Activated CD8-positive, alpha-beta T cell treated with anti-CD3 and anti-CD28 coated beads for 36 hours (primary cell): ENCODE measurements at regions of chr12 and their contacts with region 1.

Region 1: GRCh38 chr12:9760699-9761418 is at the start of gene CD69:
- DNase-seq: peak; percentile 89
- ATAC-seq: peak; percentile 57
- H3K4me3 Mint-ChIP-seq: peak within 1 kb of the TSS; percentile 97
- H3K27ac Mint-ChIP-seq: peak within 1 kb of the TSS; percentile 99
- H3K4me1 Mint-ChIP-seq: peaks cover 34% of the 10 kb centered on the region
- H3K27me3 Mint-ChIP-seq: no peaks in the 10 kb centered on the region
- CTCF ChIP-seq: no peak
- total RNA-seq, gene CD69: 166 to 174 TPM

Region 2: GRCh38 chr12:9634177-9634803 is 126.6 kb before region 1 on chr12:
- CTCF ChIA-PET with region 1: no interaction called
- POLR2A ChIA-PET with region 1: no interaction called
- intact Hi-C with region 1: no loop called
- DNase-seq: peak; percentile 92
- ATAC-seq: peak; percentile 89
- H3K4me3 Mint-ChIP-seq: peak overlapping the region; percentile 31
- H3K27ac Mint-ChIP-seq: peak overlapping the region; percentile 85
- H3K4me1 Mint-ChIP-seq: peaks cover 54% of the 10 kb centered on the region
- H3K27me3 Mint-ChIP-seq: no peaks in the 10 kb centered on the region
- CTCF ChIP-seq: peak; percentile 91

Region 3: DNA sequence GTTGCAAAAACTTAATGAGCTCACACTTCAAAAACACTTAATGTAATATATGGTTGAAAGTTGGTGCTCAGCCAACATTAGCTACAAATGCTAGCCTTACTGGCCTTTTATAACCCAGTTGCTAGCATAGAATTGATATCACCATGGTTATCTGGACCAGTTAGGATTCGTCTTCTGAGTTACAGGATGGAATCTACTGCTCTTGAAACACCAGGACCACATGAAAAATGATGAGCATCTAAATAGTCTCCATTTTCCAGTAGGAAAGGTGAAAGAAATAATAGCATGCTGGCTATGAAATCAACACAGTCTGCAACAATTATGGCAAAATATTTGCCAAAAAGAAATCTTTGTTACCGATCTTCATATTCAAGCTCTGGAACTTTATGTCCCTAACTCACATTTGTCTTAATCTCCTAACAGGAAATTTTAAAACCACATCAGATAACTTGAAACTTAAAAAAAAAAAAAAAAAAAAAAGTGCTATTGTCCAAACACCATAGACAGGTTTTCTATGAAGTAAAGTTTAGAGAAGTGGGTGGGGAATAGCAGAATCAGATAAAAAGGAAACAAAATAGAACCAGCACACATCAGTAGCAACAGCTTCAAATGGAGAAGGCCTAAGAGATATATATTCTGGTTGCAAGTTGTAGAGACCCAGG is 12.5 kb after region 1 on chr12:
- CTCF ChIA-PET with region 1: interaction called, 5 read pairs
- POLR2A ChIA-PET with region 1: interaction called, 11 read pairs
- intact Hi-C with region 1: no loop called
- DNase-seq: no peak
- ATAC-seq: peak; percentile 38
- H3K4me3 Mint-ChIP-seq: peak overlapping the region; percentile 50
- H3K27ac Mint-ChIP-seq: peak overlapping the region; percentile 87
- H3K4me1 Mint-ChIP-seq: peaks cover 85% of the 10 kb centered on the region
- H3K27me3 Mint-ChIP-seq: no peaks in the 10 kb centered on the region
- CTCF ChIP-seq: no peak

Region 4: DNA sequence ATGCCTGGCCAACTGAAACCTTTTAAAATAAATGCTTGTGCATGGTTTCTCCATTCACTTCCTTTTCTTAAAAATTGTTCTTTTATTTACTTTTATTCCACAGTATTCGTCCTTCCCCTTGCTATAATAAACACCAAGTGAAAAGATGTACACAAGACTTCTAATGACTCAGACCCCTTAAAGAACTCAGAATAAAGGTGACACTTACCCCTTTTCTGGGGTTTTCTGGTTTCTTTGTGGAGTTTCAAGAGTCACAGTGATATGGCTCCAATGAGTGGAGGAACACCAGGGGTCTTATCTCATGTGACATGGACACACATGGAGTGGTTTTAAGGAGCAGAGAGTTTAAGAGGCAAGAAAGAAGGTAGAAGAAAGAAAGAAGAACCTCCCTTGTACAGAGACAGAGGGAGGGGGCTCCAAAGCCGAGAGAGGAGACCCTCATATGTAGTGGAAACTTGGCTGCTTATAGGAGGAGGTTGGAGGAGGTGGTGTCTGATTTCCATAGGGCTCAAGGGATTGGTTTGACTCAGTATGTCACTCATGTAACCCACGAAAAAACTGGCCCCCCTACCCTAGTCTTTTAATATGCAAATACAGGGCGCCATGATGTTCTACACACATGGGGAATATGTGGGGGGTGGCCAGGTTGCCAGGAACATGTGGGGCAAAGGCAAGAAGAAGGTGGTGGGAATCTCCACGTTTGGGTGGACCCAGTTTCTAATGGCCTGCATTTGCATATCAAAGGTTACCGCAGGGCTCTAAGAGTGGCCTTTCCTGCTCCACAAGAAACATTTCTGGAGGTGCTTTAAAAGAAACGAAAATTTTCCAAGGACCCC is 21.9 kb after region 1 on chr12:
- CTCF ChIA-PET with region 1: interaction called, 3 read pairs
- POLR2A ChIA-PET with region 1: interaction called, 13 read pairs
- intact Hi-C with region 1: no loop called
- DNase-seq: no peak
- ATAC-seq: peak; percentile 51
- H3K4me3 Mint-ChIP-seq: no peak overlapping the region
- H3K27ac Mint-ChIP-seq: peak overlapping the region; percentile 27
- H3K4me1 Mint-ChIP-seq: peaks cover 57% of the 10 kb centered on the region
- H3K27me3 Mint-ChIP-seq: no peaks in the 10 kb centered on the region
- CTCF ChIP-seq: no peak

Region 5: GRCh38 chr12:9797722-9798619 is 37.1 kb after region 1 on chr12:
- CTCF ChIA-PET with region 1: interaction called, 791 read pairs
- POLR2A ChIA-PET with region 1: interaction called, 501 read pairs
- intact Hi-C with region 1: loop called (anchors 1 kb)
- DNase-seq: peak; percentile 84
- ATAC-seq: peak; percentile 83
- H3K4me3 Mint-ChIP-seq: peak overlapping the region; percentile 74
- H3K27ac Mint-ChIP-seq: peak overlapping the region; percentile 86
- H3K4me1 Mint-ChIP-seq: peaks cover 47% of the 10 kb centered on the region
- H3K27me3 Mint-ChIP-seq: no peaks in the 10 kb centered on the region
- CTCF ChIP-seq: peak; percentile 80

Region 6: GRCh38 chr12:10385166-10385613 is 624.3 kb after region 1 on chr12:
- CTCF ChIA-PET with region 1: no interaction called
- POLR2A ChIA-PET with region 1: interaction called, 80 read pairs
- intact Hi-C with region 1: no loop called
- DNase-seq: no peak
- ATAC-seq: peak; percentile 68
- H3K4me3 Mint-ChIP-seq: peak overlapping the region; percentile 90
- H3K27ac Mint-ChIP-seq: peak overlapping the region; percentile 92
- H3K4me1 Mint-ChIP-seq: peaks cover 47% of the 10 kb centered on the region
- H3K27me3 Mint-ChIP-seq: no peaks in the 10 kb centered on the region
- CTCF ChIP-seq: no peak